ENCODE measurements at regions of chr3 and their contacts with region 1.

Region 1: DNA sequence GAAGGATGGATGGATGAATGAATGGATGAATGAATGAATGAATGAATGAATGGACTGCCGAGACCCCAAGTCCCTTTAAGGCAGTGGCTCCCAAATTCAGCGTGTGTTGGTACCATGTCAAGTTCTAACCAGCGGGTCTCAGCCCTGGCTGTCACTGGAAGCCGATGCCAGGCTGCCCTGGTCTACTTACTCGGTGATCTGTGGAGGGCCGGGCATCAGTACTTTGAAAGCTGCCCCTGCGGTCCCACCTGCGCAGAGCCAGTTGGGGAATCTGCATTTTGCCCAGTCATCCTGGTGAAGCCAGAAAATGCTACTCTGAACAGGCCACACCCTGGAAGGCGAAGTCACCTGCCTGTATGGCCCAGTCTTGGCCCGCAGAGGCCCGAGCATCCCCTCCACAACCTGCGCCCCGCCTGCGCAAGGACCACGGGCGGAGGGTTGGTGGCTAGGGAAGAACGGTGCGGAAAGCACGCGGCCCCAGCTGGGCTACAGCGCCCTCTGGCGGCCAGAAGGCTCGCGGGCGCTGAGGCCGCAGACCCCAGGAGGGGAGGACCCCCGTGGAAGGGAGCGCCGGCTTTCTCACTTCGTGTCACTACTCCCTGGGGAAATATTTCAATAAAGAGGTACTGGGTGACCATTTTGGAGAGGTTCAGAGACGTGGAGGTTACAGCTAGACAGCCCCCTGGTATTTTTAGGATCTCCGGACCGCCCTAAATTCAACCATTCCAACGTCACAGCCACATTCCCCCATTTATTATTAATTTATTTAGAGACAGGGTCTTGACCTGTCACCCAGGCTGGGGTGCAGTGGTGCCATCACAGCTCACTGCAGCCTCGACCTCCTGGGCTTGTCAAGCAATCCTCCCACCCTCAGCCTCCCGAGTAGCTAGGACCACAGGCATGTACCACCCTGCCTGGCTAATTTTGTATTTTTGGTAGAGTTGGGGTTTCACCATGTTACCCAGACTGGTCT is 34.9 kb downstream of the PRKCD start:
- DNase-seq: peak; percentile 94
- H3K4me3 ChIP-seq: peak overlapping the region in 1 of 2 experiments; percentile 24; a peak in 1 of 4 replicates
- H3K27ac ChIP-seq: no peak overlapping the region
- H3K4me1 ChIP-seq: peaks cover 0 to 9% of the 10 kb centered on the region in 2 experiments; a peak in 1 of 4 replicates
- H3K27me3 ChIP-seq: no peaks in the 10 kb centered on the region
- CTCF ChIP-seq: peak; percentile 99
- EP300 ChIP-seq: no peak
- RAD21 ChIP-seq: peak; percentile 86

Region 2: DNA sequence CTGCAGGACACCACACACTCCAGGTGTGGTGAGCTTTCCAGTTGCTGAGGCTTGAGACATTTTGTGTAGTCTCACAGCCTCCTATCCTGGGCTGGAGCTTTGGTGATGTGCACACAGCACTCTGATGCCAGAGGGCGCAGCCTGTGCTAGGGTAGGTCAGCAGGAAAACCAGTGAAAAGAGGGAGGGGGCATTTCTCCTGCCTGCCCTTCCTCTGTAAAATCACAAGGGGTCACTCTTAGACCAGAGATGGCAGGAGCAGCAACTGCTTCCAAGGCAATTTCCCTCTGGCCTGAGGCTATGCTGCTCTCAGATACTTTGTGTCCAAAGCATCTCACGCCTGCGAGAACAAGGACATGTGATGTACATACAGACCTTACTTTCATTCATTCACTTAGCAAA is 344.5 kb before region 1 on chr3:
- CTCF ChIA-PET with region 1: interaction called, 12 read pairs
- POLR2A ChIA-PET with region 1: no interaction called
- DNase-seq: peak; percentile 87
- H3K4me3 ChIP-seq: no peak overlapping the region; a peak in 1 of 4 replicates
- H3K27ac ChIP-seq: no peak overlapping the region
- H3K4me1 ChIP-seq: peaks cover 0 to 3% of the 10 kb centered on the region in 2 experiments; a peak in 1 of 4 replicates
- H3K27me3 ChIP-seq: no peaks in the 10 kb centered on the region
- CTCF ChIP-seq: peak; percentile 62
- EP300 ChIP-seq: no peak
- RAD21 ChIP-seq: peak; percentile 96

Region 3: GRCh38 chr3:53130179-53131061 is 65.5 kb before region 1 on chr3 and contains the start of gene RFT1:
- CTCF ChIA-PET with region 1: interaction called, 115 read pairs
- POLR2A ChIA-PET with region 1: interaction called, 3 read pairs
- DNase-seq: peak; percentile 90
- H3K4me3 ChIP-seq: peak within 1 kb of the TSS; percentile 86
- H3K27ac ChIP-seq: peak within 1 kb of the TSS; percentile 79 to 82
- H3K4me1 ChIP-seq: peaks cover 0 to 12% of the 10 kb centered on the region in 2 experiments; a peak in 2 of 4 replicates
- H3K27me3 ChIP-seq: no peaks in the 10 kb centered on the region
- CTCF ChIP-seq: no peak
- EP300 ChIP-seq: no peak
- RAD21 ChIP-seq: no peak
- polyA plus RNA-seq, gene RFT1: 13.8 and 22.9 TPM in 2 replicates

Region 4: DNA sequence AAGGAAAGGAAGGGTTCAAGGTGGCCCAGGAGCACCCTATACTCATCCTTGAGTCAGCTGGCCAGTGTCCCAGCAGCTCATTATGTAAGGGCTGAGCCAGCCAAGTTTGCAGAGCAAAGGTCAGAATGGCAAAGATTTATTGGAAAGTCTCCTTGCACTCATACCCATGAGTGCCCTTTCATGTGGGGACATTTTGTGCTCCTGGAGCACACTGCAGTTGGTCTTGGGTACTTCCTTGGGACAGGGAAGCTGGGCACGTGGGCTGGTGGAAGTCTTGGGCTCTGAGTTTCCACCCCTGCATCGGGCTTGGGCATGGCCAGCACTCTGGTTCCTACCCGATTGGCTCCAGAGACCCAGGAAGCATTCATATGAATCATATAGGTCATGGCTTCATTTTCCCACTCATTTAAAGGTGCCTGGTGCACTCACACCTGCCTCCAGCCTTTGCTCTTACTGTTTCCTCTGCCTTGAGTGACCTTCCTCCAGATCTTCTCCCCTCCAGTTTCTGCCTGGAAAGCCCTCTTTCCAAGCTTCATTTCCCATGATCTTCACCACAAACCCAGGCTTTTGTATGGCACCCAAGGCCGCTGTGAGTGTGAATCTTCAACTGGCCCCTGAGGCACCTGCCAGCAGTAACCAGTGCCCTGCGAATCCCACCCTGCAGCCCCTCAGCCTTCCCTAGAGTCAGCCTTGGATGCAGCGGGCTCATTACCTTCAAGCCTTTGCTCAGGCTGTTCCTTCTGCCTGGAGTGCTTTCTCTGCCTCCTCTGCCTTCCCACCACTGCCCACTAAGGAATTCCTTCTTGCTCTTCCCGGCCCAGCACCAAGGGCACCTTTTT is 45.4 kb before region 1 on chr3:
- CTCF ChIA-PET with region 1: interaction called, 49 read pairs
- POLR2A ChIA-PET with region 1: no interaction called
- DNase-seq: no peak
- H3K4me3 ChIP-seq: no peak overlapping the region
- H3K27ac ChIP-seq: no peak overlapping the region
- H3K4me1 ChIP-seq: peaks cover 0 to 5% of the 10 kb centered on the region in 2 experiments; a peak in 2 of 4 replicates
- H3K27me3 ChIP-seq: no peaks in the 10 kb centered on the region
- CTCF ChIP-seq: no peak
- EP300 ChIP-seq: no peak
- RAD21 ChIP-seq: no peak

Region 5: DNA sequence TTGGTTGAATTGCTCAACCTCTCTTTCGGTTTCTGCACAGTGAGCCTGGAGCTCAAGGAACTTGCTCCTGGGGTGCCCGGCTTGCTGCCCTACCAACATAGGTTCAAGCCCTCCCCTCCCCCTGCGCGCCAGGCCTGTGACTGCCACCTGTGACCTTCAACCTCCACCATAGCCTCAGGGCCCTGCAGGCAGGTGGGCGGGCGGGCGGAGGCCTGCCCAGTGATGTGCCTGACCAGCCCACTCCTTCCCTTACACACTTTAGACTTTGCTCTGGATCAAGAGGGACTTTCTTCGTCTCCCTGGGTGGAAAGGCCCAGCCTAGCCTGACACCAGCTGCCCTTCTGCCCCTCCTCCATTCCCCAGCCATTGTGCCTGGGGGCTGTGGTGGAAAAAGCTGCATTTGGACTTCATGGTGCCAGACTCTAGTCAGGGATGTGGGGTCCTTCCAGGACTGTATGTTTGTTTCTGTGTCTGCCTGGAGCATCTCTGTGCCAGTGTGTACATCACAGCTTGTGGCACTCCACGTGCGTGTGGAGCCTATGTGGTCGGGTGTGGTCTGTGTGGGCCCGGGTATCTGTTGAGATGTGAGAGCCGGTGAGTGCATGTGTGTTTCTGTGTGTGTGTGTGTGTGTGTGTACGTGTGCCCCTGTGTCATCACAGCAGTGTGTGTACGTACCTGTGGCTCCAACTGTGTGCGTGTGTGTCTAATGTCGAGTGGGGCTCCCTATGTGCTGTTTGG is 25.4 kb before region 1 on chr3:
- CTCF ChIA-PET with region 1: interaction called, 23 read pairs
- POLR2A ChIA-PET with region 1: no interaction called
- DNase-seq: no peak
- H3K4me3 ChIP-seq: no peak overlapping the region
- H3K27ac ChIP-seq: no peak overlapping the region; a peak in 1 of 4 replicates
- H3K4me1 ChIP-seq: peaks cover 0 to 61% of the 10 kb centered on the region in 2 experiments; a peak in 1 of 4 replicates
- H3K27me3 ChIP-seq: no peaks in the 10 kb centered on the region
- CTCF ChIP-seq: no peak
- EP300 ChIP-seq: no peak
- RAD21 ChIP-seq: no peak